ENCODE measurements at regions of chr21 and their contacts with region 1.

Region 1: DNA sequence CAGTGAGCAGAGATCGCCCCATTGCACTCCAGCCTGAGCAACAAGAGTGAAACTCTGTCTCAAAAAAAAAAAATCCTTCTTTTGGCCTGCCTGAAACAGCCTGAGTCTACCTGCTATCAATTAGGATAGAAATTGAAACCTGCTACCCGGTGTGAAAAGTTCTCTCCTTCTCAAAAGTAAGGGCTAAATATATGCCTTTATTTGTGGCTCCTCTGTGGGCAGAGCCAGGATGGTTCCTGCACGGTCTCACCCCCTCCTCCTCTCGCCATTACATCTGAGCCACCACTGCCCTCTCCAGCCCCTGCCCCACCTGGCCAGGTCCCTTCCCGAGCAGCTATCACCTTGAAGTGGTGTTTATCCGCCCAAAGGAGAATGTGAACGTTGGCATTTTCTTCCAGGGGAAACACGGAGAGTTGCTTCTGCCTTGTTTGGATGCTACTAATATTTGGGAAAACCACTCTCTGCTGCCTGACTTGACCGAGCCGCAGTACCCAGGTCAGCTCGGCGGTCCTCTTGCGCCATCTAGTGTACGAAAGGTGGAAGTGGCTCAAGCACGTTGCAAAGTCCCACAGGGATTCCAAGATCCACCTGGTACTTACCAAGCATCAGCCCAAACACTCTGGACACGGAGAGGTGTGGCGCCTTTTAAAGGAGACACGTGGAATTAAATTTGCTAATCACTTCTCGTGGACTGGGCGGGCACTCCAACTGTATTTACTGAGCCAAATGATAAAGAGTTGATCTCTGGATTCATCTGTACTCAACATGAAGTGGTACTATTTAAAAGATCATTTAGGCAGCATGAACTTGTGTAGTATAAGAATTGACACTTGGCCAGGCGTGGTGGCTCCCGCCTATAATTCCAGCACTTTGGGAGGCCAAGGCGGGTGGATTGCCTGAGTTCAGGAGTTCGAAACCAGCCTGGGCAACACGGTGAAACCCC is 31.9 kb downstream of the SETD4 start:
- DNase-seq: peak; percentile 73
- ATAC-seq: peak; percentile 86
- H3K4me3 Mint-ChIP-seq: no peak overlapping the region
- H3K27ac Mint-ChIP-seq: no peak overlapping the region
- H3K4me1 Mint-ChIP-seq: peaks cover 4% of the 10 kb centered on the region
- H3K27me3 Mint-ChIP-seq: no peaks in the 10 kb centered on the region
- CTCF ChIP-seq: peak; percentile 99

Region 2: DNA sequence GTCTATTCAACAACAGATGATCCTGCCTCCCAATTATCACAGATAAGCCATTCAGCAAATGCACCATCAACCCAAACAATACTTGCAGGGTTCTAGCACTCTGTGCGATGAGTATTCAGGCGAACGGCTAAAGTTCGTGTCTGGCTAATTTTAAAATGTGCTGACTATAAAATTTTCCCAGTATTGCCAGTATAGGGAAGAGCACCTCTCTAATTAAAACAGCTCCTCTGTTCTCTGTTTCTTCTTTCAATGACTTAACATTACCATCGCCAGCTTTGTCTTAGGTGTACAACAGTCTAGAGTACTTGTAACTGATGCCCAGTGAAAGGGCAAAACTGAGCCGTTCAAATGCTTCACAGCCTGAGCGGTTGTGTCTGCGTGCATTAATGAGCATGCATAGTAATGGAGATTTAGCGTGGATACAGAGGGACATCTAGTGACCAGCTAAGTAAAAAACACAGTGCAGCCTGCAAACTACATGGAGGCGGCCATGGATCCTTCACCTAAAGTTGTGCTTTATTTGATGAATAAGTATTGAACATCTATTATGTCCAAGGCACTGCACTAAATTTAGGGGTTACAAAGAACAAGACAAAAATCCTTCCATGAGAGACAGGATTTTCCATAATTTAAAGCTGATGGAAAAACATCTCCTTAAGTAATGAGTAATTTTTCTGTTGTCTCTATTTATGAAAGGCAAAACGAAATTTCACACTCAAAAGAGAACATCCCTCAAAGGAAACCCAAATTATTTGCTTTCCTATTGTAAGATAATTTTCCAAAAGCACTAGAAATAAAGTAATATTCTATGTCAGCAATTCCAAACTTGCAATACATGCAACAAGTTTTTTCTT is 88.1 kb before region 1 on chr21:
- CTCF ChIA-PET with region 1: interaction called, 3 read pairs
- POLR2A ChIA-PET with region 1: no interaction called
- intact Hi-C with region 1: loop called (anchors 10 kb)
- DNase-seq: peak; percentile 9
- ATAC-seq: peak; percentile 47
- H3K4me3 Mint-ChIP-seq: no peak overlapping the region
- H3K27ac Mint-ChIP-seq: no peak overlapping the region
- H3K4me1 Mint-ChIP-seq: no peaks in the 10 kb centered on the region
- H3K27me3 Mint-ChIP-seq: peaks cover 7% of the 10 kb centered on the region
- CTCF ChIP-seq: no peak

Region 3: GRCh38 chr21:36008505-36008904 is 19.9 kb before region 1 on chr21:
- CTCF ChIA-PET with region 1: no interaction called
- POLR2A ChIA-PET with region 1: no interaction called
- intact Hi-C with region 1: no loop called
- DNase-seq: no peak
- ATAC-seq: no peak
- H3K4me3 Mint-ChIP-seq: no peak overlapping the region
- H3K27ac Mint-ChIP-seq: no peak overlapping the region
- H3K4me1 Mint-ChIP-seq: no peaks in the 10 kb centered on the region
- H3K27me3 Mint-ChIP-seq: peaks cover 5% of the 10 kb centered on the region
- CTCF ChIP-seq: no peak

Region 4: DNA sequence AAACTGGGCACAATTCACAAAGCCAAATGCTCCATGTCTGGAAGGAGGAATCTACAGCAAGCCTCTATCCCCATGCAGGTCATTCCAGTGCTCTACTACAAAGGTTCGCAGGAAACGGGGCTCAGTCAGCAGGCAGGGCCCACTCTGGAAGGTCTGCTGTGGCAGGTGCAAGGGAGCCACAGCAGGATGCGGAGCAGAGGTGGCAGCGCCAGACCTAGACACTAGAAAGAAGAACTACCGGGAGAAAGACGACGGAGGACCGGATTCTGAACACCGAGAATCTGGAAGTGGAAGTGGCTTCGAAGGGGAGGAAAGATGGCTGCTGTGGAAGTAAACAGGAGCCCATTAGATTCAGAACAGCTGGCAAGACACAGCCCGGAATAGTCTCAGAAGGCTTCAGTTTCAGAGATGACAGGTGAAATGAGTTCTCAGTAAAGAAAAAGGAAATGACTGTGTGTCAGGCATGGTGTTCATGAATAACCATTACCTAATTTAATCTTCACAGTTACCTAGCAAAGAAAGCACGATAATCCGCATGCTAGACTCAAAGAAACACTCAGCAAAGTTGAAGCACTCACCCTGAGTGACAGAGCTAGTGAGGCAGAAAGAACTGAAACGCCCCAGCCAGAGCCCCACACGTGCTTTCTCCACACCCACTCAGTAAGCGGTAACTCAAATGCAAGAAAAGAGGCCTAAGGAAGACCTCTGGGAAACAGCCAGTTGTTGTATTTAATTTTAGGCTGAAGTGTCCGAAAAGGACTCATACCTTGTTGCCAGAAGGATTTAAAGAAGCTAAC is 10.5 kb after region 1 on chr21:
- CTCF ChIA-PET with region 1: interaction called, 10 read pairs
- POLR2A ChIA-PET with region 1: interaction called, 3 read pairs
- intact Hi-C with region 1: no loop called
- DNase-seq: no peak
- ATAC-seq: no peak
- H3K4me3 Mint-ChIP-seq: no peak overlapping the region
- H3K27ac Mint-ChIP-seq: no peak overlapping the region
- H3K4me1 Mint-ChIP-seq: no peaks in the 10 kb centered on the region
- H3K27me3 Mint-ChIP-seq: no peaks in the 10 kb centered on the region
- CTCF ChIP-seq: no peak

Measured in activated CD8-positive, alpha-beta T cell treated with anti-CD3 and anti-CD28 coated beads for 36 hours (primary cell).